ENCODE measurements at regions of chr9 and their contacts with region 1.

Region 1: GRCh38 chr9:6353851-6354686 is 25.9 kb downstream of the TPD52L3 start:
- DNase-seq: peak; percentile 19
- ATAC-seq: peak; percentile 95
- H3K4me3 Mint-ChIP-seq: no peak overlapping the region
- H3K27ac Mint-ChIP-seq: no peak overlapping the region
- H3K4me1 Mint-ChIP-seq: peaks cover 10% of the 10 kb centered on the region
- H3K27me3 Mint-ChIP-seq: no peaks in the 10 kb centered on the region; the same call in 1 of the 2 replicates
- CTCF ChIP-seq: peak; percentile 68

Region 2: DNA sequence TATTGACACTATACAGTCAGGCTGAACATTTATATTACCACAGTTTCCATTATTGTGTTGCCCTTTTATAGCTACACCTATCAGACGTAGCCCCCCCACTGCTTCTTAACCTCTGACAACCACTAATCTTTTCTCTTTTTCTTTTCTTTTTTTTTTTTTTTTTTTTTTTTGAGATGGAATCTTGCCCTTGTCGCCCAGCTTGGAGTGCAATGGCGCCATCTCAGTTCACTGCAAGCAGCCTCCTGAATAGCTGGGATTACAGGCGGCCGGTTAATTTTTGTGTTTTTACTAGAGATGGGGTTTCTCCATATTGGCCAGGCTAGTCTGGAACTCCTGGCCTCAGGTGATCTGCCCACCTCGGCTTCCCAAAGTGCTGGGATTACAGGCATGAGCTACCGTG is 134.3 kb after region 1 on chr9:
- CTCF ChIA-PET with region 1: interaction called, 17 read pairs
- POLR2A ChIA-PET with region 1: no interaction called
- DNase-seq: peak; percentile 28
- ATAC-seq: peak; percentile 75
- H3K4me3 Mint-ChIP-seq: no peak overlapping the region
- H3K27ac Mint-ChIP-seq: no peak overlapping the region
- H3K4me1 Mint-ChIP-seq: no peaks in the 10 kb centered on the region
- H3K27me3 Mint-ChIP-seq: no peaks in the 10 kb centered on the region
- CTCF ChIP-seq: no peak